ENCODE measurements at regions of chr2 and their contacts with region 1.

Region 1: DNA sequence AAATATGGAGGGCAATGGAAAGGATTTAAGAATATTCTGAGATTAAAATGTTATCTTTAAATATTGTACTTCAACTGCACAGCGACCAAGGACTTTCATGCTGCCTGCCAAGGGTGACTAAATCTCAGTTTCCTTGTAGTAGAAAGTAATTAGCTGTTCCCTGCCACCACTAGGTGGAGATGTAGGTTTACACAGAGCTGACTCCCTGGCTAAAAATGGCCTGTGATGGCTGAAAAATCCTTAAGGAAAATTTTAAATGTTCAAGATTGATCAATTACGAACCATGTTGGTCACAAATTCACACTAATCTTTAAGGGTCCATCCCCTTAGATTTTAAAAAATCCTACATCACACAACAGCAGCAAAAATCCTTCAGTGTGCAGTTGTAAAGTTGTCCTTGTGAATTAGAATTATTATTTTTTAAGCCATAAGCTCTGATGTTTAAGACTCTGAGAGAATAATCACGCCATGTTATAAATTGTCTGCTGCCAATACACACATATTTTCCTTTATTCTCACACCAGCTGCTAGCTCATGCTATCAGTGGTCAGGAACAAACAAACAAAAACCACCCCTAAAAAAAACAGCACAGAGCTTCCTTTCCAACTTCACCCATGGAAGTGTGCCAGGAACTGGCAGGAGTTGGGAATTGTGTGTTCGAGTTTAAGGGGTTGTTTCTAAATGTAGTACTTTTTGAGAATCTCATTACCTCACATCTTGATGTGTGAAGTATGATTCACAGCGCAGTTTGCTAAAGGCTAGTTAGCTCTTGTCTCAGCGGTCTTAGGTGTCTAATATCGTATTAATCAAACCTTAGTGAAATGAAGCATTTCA is 399.8 kb downstream of the TMEM182 start:
- DNase-seq: peak; percentile 49
- H3K4me3 ChIP-seq: peak overlapping the region in 1 of 2 experiments; percentile 10; a peak in 1 of 4 replicates
- H3K27ac ChIP-seq: no peak overlapping the region
- H3K4me1 ChIP-seq: no peaks in the 10 kb centered on the region
- H3K27me3 ChIP-seq: 0 out of 2 replicates have a peak, but pooled peaks cover 10% of the 10 kb centered on the region
- CTCF ChIP-seq: peak; percentile 88
- EP300 ChIP-seq: no peak
- RAD21 ChIP-seq: peak; percentile 82

Region 2: DNA sequence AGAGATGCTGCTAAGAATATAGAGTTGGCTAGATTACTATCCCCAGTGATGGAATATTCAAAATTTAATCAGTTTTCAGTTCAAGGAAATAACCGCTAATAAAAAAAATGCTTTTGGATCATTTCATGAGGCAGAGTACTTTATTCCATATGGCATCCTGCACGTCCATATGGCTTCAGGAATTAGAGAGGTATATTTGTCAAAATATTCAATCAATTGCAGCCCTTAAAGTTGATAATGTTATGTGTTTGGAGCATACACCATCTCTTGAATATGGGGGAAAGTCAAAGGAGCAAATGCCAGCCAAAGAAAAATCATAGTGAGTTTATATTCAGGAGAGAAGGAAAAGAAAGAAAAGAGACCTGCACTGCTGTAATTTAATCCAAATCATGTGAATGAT is 133.5 kb before region 1 on chr2:
- CTCF ChIA-PET with region 1: no interaction called
- POLR2A ChIA-PET with region 1: no interaction called
- DNase-seq: no peak
- H3K4me3 ChIP-seq: no peak overlapping the region
- H3K27ac ChIP-seq: no peak overlapping the region
- H3K4me1 ChIP-seq: no peaks in the 10 kb centered on the region
- H3K27me3 ChIP-seq: no peaks in the 10 kb centered on the region
- CTCF ChIP-seq: no peak
- EP300 ChIP-seq: no peak
- RAD21 ChIP-seq: no peak

Region 3: GRCh38 chr2:103103678-103104077 is 58.0 kb before region 1 on chr2:
- CTCF ChIA-PET with region 1: interaction called, 12 read pairs
- POLR2A ChIA-PET with region 1: no interaction called
- DNase-seq: no peak
- H3K4me3 ChIP-seq: no peak overlapping the region
- H3K27ac ChIP-seq: no peak overlapping the region
- H3K4me1 ChIP-seq: no peaks in the 10 kb centered on the region
- H3K27me3 ChIP-seq: no peaks in the 10 kb centered on the region
- CTCF ChIP-seq: no peak
- EP300 ChIP-seq: no peak
- RAD21 ChIP-seq: no peak

Region 4: DNA sequence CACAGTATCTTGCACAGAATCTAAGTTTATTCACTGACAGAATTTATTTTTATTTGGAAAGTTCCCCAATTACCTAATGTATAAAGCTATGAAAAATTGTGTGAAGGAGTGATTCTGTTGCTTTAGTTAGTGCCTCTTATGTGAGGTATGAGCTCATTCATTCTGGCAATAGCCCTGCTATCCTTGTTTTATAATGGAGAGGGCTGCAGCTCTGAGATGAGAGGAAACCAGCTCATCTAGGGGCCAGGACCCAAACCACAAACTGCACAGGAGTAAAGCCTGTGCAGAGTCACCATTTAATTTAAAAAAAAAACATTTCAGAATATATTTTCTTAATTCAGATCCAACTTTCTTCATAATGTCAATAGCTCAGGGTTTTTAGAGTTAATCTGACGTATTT is 16.8 kb before region 1 on chr2:
- CTCF ChIA-PET with region 1: interaction called, 27 read pairs
- POLR2A ChIA-PET with region 1: no interaction called
- DNase-seq: no peak
- H3K4me3 ChIP-seq: no peak overlapping the region
- H3K27ac ChIP-seq: no peak overlapping the region
- H3K4me1 ChIP-seq: no peaks in the 10 kb centered on the region
- H3K27me3 ChIP-seq: no peaks in the 10 kb centered on the region; the same call in 1 of the 2 replicates
- CTCF ChIP-seq: no peak
- EP300 ChIP-seq: no peak
- RAD21 ChIP-seq: no peak

Region 5: GRCh38 chr2:103383541-103383940 is 221.9 kb after region 1 on chr2:
- CTCF ChIA-PET with region 1: no interaction called
- POLR2A ChIA-PET with region 1: no interaction called
- DNase-seq: no peak
- H3K4me3 ChIP-seq: no peak overlapping the region
- H3K27ac ChIP-seq: no peak overlapping the region
- H3K4me1 ChIP-seq: no peaks in the 10 kb centered on the region
- H3K27me3 ChIP-seq: no peaks in the 10 kb centered on the region
- CTCF ChIP-seq: no peak
- EP300 ChIP-seq: no peak
- RAD21 ChIP-seq: no peak

Region 6: GRCh38 chr2:104944495-104944894 is 1782.8 kb after region 1 on chr2:
- CTCF ChIA-PET with region 1: interaction called, 20 read pairs
- POLR2A ChIA-PET with region 1: no interaction called
- DNase-seq: peak; percentile 35
- H3K4me3 ChIP-seq: no peak overlapping the region
- H3K27ac ChIP-seq: no peak overlapping the region
- H3K4me1 ChIP-seq: no peaks in the 10 kb centered on the region; a peak in 1 of 4 replicates
- H3K27me3 ChIP-seq: 0 out of 2 replicates have a peak, but pooled peaks cover 4% of the 10 kb centered on the region
- CTCF ChIP-seq: peak; percentile 56
- EP300 ChIP-seq: no peak
- RAD21 ChIP-seq: peak; percentile 76